ENCODE measurements at regions of chr3 and their contacts with region 1.

Region 1: DNA sequence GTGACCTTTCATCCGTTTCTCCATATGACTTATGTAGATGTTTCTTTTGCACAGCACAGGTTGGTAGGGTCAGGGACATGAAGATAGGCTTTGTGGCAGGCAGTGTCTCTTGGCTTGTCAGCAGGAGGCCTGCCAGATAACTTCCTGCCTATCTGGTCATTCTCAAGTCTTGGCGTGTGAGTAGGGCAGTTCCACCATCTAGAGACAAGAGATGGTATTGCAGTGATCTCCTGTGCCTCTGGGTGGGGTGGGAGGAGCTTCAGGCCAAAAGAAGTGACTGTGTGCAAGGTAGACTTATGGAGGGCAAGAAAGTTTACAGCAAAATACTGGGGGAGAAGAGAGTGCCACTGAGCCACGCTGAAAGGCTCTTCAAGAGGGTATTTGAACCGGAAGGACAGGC is 11.0 kb downstream of the TEX264 start:
- DNase-seq: peak; percentile 67
- H3K4me3 ChIP-seq: no peak overlapping the region
- H3K27ac ChIP-seq: no peak overlapping the region
- H3K27me3 ChIP-seq: no peaks in the 10 kb centered on the region
- CTCF ChIP-seq: peak; percentile 90

Region 2: DNA sequence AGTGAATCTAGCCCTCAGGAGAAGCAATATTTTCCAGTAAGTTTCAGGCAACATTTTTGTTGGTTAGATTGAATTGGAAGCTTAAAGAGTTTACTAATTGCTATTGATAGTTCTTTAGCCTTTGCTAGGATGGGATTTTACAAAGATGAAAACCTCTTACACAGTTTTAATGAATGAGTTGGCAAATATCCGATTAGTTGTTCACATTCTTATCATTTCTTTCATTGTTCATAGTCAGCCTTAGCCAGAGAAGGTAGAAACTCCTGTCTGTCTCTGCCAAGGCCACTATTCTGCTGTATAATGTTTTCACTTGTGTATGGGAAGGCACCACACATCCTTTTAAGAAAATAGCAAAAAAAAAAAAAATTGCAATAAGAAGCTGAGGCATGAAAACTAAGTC is 519.0 kb before region 1 on chr3:
- CTCF ChIA-PET with region 1: no interaction called
- POLR2A ChIA-PET with region 1: no interaction called
- DNase-seq: no peak
- H3K4me3 ChIP-seq: no peak overlapping the region
- H3K27ac ChIP-seq: no peak overlapping the region
- H3K27me3 ChIP-seq: no peaks in the 10 kb centered on the region
- CTCF ChIP-seq: no peak

Region 3: DNA sequence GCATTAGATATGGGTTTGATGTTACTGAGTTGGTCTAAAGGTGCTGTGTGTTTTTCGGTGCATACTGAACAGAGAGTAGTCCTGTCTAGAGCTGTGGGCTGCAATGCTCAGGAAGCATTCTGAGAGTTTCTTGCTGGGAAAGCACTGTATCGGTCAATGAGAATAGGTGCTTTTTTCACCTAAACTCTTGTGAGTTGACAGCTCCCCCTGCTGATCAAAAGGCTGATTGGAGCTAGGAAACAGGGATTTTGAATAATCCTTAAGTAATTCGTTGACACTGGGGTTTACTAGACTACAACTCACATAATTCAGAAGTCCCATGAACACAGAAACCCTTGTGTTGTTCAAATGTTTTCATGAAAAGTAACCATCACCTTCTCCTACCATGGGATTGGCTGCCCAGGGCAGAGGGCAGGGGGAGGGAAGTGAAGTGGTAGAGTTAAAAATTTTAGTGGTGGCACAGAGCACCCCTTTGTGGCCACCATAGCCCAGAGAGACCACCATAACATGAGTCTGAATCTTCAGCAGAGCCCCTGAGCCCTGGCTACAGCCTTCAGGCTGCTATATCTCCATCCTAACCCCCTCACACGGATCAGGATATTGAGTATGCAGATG is 310.0 kb before region 1 on chr3:
- CTCF ChIA-PET with region 1: no interaction called
- POLR2A ChIA-PET with region 1: no interaction called
- DNase-seq: peak; percentile 43
- H3K4me3 ChIP-seq: no peak overlapping the region
- H3K27ac ChIP-seq: no peak overlapping the region
- H3K27me3 ChIP-seq: peaks cover 5% of the 10 kb centered on the region
- CTCF ChIP-seq: peak; percentile 83

Region 4: DNA sequence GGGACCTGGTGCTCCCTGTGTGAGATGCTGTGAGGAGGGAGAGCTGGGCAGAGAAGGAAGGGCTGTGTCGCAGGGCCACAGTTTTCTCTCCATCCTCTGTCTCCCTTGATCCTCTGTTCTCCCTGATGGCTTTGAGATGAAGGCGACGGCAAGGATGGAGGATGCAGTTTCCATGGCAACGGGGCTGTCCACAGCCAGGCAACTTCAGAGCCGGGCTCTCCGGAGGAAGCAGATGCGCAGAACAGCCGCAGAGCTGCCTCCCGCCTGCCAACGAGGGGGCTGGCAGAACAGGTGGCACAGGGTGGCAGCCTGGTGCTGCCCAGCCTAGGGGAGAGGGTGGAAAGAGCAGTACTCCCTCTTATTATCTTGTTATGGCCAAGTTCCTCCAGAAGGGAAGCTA is 14.9 kb after region 1 on chr3:
- CTCF ChIA-PET with region 1: interaction called, 11 read pairs
- POLR2A ChIA-PET with region 1: no interaction called
- DNase-seq: no peak
- H3K4me3 ChIP-seq: no peak overlapping the region
- H3K27ac ChIP-seq: no peak overlapping the region
- H3K27me3 ChIP-seq: no peaks in the 10 kb centered on the region
- CTCF ChIP-seq: no peak